ENCODE measurements at regions of chr22 and their contacts with region 1.

Region 1: GRCh38 chr22:19986410-19987341 is 29.9 kb downstream of the ARVCF start:
- DNase-seq: peak; percentile 50 to 73
- ATAC-seq: peak; percentile 59 to 64
- H3K4me3 ChIP-seq: peak overlapping the region; percentile 61 to 98 (median 86)
- H3K27ac ChIP-seq: peak overlapping the region; percentile 92 to 100 (median 96)
- H3K4me1 ChIP-seq: peaks cover 45 to 51% of the 10 kb centered on the region in 2 donors
- H3K27me3 ChIP-seq: no peaks in the 10 kb centered on the region
- CTCF ChIP-seq: no peak
- POLR2A ChIP-seq: peak; percentile 94 to 95

Region 2: DNA sequence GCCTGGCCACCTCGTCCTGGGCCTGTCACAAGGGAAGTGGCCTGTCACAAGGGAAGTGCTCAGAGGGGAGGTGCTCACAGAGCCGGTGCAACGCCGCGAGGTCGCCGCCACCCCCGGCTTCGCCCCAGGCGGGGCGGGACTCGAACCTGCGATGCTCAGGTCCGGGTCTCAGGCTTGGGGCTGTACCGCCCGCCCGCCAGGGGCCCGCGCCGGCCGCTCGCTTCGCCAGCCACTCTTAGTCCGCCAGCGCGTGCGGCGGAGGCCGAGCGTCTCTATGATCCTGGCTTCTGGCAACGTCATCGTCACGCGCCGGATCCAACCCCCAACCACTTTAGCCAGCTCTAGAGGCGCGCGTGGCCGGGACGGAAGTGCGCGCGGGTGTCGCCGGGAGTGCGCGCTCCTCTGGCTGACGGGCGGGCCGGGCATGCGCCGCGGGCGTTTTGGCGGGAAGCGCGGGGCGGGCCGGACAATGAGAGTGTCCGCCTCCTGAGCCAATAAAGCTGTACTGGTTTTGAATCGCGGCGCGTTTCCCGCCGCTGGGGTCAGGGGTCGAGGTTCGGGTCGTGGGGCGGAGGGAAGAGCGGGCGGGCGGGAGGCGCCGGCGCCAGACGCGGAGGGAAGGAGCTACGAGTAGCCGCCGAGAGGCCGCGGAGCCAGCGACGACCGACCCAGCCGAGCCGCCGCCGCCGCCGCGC is 130.4 kb after region 1 on chr22 and contains the start of gene TRMT2A:
- in situ Hi-C with region 1: no loop called
- intact Hi-C with region 1: loop called (anchors 5 kb)
- DNase-seq: peak; percentile 94 to 98
- ATAC-seq: peak; percentile 90 to 93
- H3K4me3 ChIP-seq: peak within 1 kb of the TSS; percentile 79 to 97 (median 86)
- H3K27ac ChIP-seq: peak within 1 kb of the TSS; percentile 94 to 99 (median 96)
- H3K4me1 ChIP-seq: peaks cover 28 to 34% of the 10 kb centered on the region in 2 donors
- H3K27me3 ChIP-seq: no peaks in the 10 kb centered on the region
- CTCF ChIP-seq: peak in 2 of 5 experiments; percentile 9 to 10
- POLR2A ChIP-seq: peak; percentile 76 to 79
- total RNA-seq, gene TRMT2A: 16.9 to 38.0 (median 28.2) TPM

Measured in gastrocnemius medialis (tissue), 4 donors.